Heart left ventricle (tissue), 16 donors: ENCODE measurements at regions of chr7 and their contacts with region 1.

Region 1: GRCh38 chr7:2209146-2209960 is 23.4 kb downstream of the MAD1L1 start:
- DNase-seq: peak; percentile 72 to 82 (median 77)
- ATAC-seq: peak; percentile 53 to 72 (median 63)
- H3K4me3 ChIP-seq: no peak overlapping the region
- H3K27ac ChIP-seq: no peak overlapping the region
- H3K4me1 ChIP-seq: peaks cover 0 to 10% (median 2%) of the 10 kb centered on the region in 12 donors
- H3K27me3 ChIP-seq: no peaks in the 10 kb centered on the region
- CTCF ChIP-seq: peak; percentile 61 to 87 (median 79)
- POLR2A ChIP-seq: no peak

Region 2: GRCh38 chr7:1579481-1580421 is 629.6 kb before region 1 on chr7:
- intact Hi-C with region 1: loop called (anchors 1 to 10 kb)
- DNase-seq: peak; percentile 69 to 88 (median 75)
- ATAC-seq: peak; percentile 82 to 93 (median 90)
- H3K4me3 ChIP-seq: no peak overlapping the region
- H3K27ac ChIP-seq: no peak overlapping the region
- H3K4me1 ChIP-seq: peaks cover 0 to 17% (median 6%) of the 10 kb centered on the region in 12 donors
- H3K27me3 ChIP-seq: no peaks in the 10 kb centered on the region
- CTCF ChIP-seq: peak; percentile 79 to 90 (median 84)
- POLR2A ChIP-seq: no peak

Region 3: GRCh38 chr7:1742555-1743303 is 466.6 kb before region 1 on chr7:
- intact Hi-C with region 1: loop called in 1 of 10 experiments (anchors 10 kb)
- DNase-seq: peak; percentile 60 to 77 (median 64)
- ATAC-seq: peak in 3 of 4 donors; percentile 22 to 60 (median 34)
- H3K4me3 ChIP-seq: peak overlapping the region in 7 of 12 donors; percentile 1 to 37 (median 18)
- H3K27ac ChIP-seq: peak overlapping the region in 4 of 12 donors; percentile 47 to 68 (median 62)
- H3K4me1 ChIP-seq: peaks cover 3 to 30% (median 16%) of the 10 kb centered on the region in 12 donors
- H3K27me3 ChIP-seq: no peaks in the 10 kb centered on the region
- CTCF ChIP-seq: no peak
- POLR2A ChIP-seq: no peak

Region 4: DNA sequence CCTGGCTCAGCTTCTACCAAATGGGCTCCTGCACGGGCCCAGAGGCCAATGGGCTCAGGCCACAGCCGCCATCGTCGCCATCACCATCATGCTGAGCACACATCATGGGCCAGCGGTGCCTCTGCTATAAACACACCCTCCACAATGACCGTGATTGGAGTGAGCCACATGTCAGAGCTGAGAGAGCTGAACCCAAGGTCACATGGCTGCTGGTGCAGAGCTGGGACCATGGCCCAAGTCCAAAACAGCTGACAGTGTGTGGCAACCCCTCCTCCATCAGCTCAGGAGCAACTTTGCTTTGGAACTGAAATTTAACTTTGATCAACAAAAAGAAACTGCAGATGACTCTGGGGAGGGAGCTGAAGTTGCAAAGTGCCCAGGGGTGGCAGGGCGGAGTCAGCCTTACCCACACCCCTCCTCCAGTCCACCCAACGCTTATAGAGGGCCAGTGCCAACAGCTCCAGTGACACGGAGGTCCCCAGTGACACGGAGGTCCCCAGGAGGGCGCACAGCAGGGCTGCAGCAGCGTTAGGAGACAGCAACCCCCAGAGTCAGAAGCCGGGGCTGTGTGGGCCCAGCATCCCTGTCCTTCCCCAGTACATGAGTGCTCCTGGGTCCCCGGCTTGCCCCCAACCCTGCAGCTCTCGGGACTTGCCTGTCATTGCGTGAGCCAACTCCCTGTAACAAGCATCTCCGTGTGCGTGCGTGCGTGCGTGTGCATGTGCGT is 289.7 kb before region 1 on chr7:
- intact Hi-C with region 1: loop called in 1 of 10 experiments (anchors 10 kb)
- DNase-seq: peak in 4 of 5 donors; percentile 60 to 81 (median 68)
- ATAC-seq: peak; percentile 77 to 89 (median 83)
- H3K4me3 ChIP-seq: peak overlapping the region in 1 of 12 donors; percentile 40
- H3K27ac ChIP-seq: peak overlapping the region in 1 of 12 donors; percentile 73
- H3K4me1 ChIP-seq: peaks cover 0 to 62% (median 8%) of the 10 kb centered on the region in 12 donors
- H3K27me3 ChIP-seq: no peaks in the 10 kb centered on the region
- CTCF ChIP-seq: no peak
- POLR2A ChIP-seq: no peak

Region 5: DNA sequence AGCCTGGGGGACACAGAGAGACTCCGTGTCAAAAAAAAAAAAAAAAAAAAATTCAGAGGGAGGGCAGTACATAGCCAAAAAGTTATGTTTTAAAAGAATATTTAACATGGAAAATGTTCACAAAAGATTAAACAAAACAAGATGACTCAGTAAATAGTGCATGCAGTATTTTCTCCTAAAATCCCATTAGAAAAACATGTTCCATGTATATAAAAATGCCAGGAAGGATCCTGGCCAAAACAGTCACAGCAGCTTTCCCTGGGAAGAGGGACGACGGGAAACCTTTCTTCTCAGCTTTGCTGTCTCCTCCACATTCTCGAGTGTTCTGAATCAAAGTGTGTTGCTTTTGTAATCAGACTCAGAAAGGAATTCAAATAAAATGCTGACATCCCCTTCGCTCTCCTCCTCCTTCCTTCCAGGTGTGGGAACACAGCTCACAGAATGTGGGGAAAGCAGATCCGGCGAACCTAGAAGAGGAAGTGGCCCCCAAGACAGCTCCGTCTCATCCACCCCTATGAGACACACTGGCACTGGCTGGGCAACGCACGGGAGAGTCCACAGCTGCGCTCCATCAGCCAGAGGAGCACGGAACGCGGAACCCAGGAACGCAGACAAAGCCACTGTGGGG is 116.0 kb before region 1 on chr7:
- intact Hi-C with region 1: no loop called
- DNase-seq: no peak
- ATAC-seq: no peak
- H3K4me3 ChIP-seq: no peak overlapping the region
- H3K27ac ChIP-seq: no peak overlapping the region
- H3K4me1 ChIP-seq: no peaks in the 10 kb centered on the region
- H3K27me3 ChIP-seq: no peaks in the 10 kb centered on the region
- CTCF ChIP-seq: no peak
- POLR2A ChIP-seq: no peak

Region 6: GRCh38 chr7:2109936-2110585 is 99.3 kb before region 1 on chr7:
- intact Hi-C with region 1: loop called in 2 of 10 experiments (anchors 2 to 5 kb)
- DNase-seq: peak in 1 of 5 donors; percentile 42
- ATAC-seq: peak in 2 of 4 donors; percentile 18 to 40
- H3K4me3 ChIP-seq: no peak overlapping the region
- H3K27ac ChIP-seq: peak overlapping the region in 2 of 12 donors; percentile 7 to 9
- H3K4me1 ChIP-seq: peaks cover 0 to 49% (median 15%) of the 10 kb centered on the region in 12 donors
- H3K27me3 ChIP-seq: no peaks in the 10 kb centered on the region
- CTCF ChIP-seq: no peak
- POLR2A ChIP-seq: no peak

Region 7: DNA sequence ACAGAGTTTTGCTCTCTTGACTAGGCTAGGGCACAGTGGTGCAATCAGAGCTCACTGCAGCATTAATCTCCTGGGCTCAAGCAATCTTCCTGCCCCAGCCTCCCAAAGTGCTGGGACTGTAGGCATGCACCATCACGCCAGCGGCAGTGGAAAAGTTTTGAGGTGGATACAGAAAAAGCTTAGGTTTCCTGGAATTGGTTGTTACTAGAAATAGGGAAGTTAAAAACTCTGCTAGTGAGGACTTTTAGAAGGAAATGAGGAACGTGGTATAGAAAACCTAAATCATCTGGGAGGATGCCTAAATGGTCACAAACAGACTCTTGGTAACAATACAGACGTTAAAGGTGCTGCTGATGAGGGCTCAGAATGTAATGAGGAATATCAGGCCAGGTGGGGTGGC is 115.8 kb after region 1 on chr7:
- intact Hi-C with region 1: no loop called
- DNase-seq: no peak
- ATAC-seq: peak in 1 of 4 donors; percentile 34
- H3K4me3 ChIP-seq: no peak overlapping the region
- H3K27ac ChIP-seq: peak overlapping the region in 3 of 12 donors; percentile 12 to 88 (median 37)
- H3K4me1 ChIP-seq: peaks cover 0 to 21% (median 0%) of the 10 kb centered on the region in 12 donors
- H3K27me3 ChIP-seq: no peaks in the 10 kb centered on the region
- CTCF ChIP-seq: no peak
- POLR2A ChIP-seq: no peak

Region 8: GRCh38 chr7:2670720-2671391 is 461.5 kb after region 1 on chr7:
- intact Hi-C with region 1: no loop called
- DNase-seq: peak; percentile 65 to 87 (median 74)
- ATAC-seq: peak; percentile 55 to 85 (median 75)
- H3K4me3 ChIP-seq: no peak overlapping the region
- H3K27ac ChIP-seq: no peak overlapping the region
- H3K4me1 ChIP-seq: peaks cover 0 to 7% (median 1%) of the 10 kb centered on the region in 12 donors
- H3K27me3 ChIP-seq: peaks cover 0 to 7% (median 0%) of the 10 kb centered on the region in 9 donors
- CTCF ChIP-seq: peak; percentile 73 to 90 (median 82)
- POLR2A ChIP-seq: no peak